HCT116 (cell line): ENCODE measurements at regions of chr19 and their contacts with region 1.

Region 1: DNA sequence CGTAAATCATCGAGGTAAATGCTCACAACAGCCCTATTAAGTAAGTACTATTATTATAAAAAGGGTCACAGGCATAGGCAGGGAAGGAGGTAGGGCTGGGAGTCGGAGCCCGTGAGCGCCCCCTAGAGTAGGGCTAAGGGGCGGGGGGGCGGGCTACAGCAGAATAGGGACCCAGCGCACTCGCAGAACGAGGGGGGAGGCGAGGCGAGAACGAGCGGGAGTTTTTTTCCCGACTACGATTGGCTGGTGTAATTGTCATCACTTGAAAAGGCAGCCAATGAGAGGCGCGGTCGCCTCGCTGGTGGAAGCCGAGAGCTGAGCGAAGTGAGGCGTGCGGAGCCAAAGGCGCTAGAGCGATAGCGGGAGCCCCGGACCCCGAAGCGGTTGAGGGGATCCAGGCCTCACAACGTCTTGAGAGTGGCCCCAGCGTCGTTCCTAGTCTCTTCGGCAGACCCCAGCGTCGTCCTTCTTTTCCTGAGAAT is 24.2 kb downstream of the KEAP1 start:
- DNase-seq: peak; percentile 80
- ATAC-seq: peak; percentile 93
- H3K4me3 ChIP-seq: no peak overlapping the region
- H3K27ac ChIP-seq: no peak overlapping the region
- H3K4me1 ChIP-seq: peaks cover 2 to 19% of the 10 kb centered on the region in 2 experiments; a peak in 3 of 4 replicates
- H3K27me3 ChIP-seq: no peaks in the 10 kb centered on the region
- CTCF ChIP-seq: peak; percentile 37 to 48 (median 45); a peak in 4 of 6 replicates
- POLR2A ChIP-seq: no peak
- RAD21 ChIP-seq: peak; percentile 19; the same call in 1 of the 2 replicates

Region 2: DNA sequence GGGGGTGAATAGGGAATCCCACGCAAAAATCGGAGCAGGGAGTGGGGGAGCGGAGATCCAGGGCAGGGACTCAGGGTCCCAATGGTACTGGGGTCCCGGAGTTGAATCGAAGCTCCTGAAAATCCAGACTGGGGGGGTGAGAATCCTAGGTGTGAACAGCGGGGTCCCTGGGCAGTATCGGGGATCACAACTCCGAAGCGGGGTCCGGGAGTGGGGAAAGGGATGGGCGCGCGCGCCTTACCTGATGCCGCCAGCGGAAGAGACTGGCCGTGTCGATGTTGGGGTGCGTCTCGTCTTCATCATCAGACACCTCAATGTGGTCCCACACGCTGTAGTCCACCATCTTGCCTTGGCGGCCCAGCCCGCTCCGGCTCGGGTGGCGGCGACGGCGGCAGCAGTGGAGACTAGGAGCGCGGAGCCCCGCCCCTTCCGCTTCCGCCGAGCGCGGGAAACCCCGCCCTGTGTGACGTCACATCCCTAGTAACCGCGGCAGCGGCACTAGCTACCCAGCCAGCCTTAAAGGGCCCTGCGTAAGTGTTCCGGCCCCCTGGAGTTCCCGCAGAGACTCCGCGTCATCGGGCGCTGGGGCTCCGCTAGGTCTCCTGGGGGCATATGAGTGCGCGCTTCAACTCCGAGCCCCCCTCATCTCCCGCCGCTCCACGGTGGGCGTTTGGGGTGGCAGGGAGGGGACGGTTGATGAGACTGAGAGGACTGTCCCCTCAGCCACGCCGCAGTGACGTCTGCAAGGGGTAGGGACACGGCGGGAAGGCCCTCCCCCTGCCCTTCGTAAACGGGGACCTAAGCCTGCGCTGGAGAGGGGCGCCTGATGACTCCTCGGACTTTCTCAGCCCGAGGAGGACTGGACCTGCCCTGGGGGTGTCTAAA is 75.6 kb before region 1 on chr19 and contains the start of gene CDC37:
- CTCF ChIA-PET with region 1: interaction called, 5 read pairs
- POLR2A ChIA-PET with region 1: no interaction called
- RAD21 ChIA-PET with region 1: interaction called in 1 of 2 experiments, 4 read pairs
- intact Hi-C with region 1: loop called (anchors 5 kb)
- DNase-seq: peak; percentile 93
- ATAC-seq: peak; percentile 84
- H3K4me3 ChIP-seq: peak within 1 kb of the TSS; percentile 94 to 100
- H3K27ac ChIP-seq: peak within 1 kb of the TSS; percentile 79
- H3K4me1 ChIP-seq: peaks cover 11 to 36% of the 10 kb centered on the region in 2 experiments
- H3K27me3 ChIP-seq: no peaks in the 10 kb centered on the region
- CTCF ChIP-seq: no peak
- POLR2A ChIP-seq: peak; percentile 47
- RAD21 ChIP-seq: no peak
- total RNA-seq, gene CDC37: 260 TPM

Region 3: DNA sequence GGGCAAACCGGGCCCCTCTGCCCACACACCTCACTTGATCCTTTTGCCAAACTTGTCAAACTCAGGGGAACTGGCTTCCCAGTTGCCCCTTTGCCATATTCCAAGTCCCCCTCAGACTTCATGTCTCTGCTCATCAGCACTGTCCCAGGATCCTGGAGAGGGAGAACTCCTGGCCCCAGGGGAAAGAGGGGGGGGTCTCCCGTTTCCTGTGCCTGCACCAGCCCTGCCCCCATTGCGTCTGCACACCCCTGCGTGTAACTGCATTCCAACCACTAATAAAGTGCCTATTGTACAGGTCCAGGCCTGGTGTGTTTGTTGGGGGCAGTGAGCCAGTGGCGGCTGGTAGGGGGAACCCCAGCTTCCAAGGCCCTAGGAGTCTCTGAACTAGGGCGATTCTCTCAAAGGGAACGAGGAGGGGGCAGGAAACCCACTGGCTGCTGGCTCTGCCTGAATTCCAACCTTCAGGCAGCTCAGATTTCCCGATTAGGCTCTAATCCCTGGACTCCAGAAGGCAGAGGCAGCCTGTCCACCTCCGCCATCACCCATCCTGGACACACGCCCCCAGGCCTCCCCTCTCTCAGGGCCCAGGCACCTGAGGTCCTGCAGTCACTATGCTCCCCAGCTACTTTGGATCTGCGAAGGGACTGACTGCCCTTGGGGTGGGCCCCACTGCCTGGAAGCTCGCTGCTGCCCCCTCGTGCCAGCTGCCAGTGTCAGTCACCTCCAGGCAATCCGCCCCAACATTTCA is 165.5 kb after region 1 on chr19:
- CTCF ChIA-PET with region 1: interaction called, 14 read pairs
- POLR2A ChIA-PET with region 1: no interaction called
- RAD21 ChIA-PET with region 1: no interaction called
- intact Hi-C with region 1: no loop called
- DNase-seq: peak; percentile 35
- ATAC-seq: peak; percentile 95
- H3K4me3 ChIP-seq: no peak overlapping the region
- H3K27ac ChIP-seq: peak overlapping the region; percentile 25; the same call in 1 of the 2 replicates
- H3K4me1 ChIP-seq: peaks cover 5 to 13% of the 10 kb centered on the region in 2 experiments; a peak in 3 of 4 replicates
- H3K27me3 ChIP-seq: no peaks in the 10 kb centered on the region
- CTCF ChIP-seq: peak; percentile 83 to 97 (median 85)
- POLR2A ChIP-seq: no peak
- RAD21 ChIP-seq: peak; percentile 96